SK-N-SH (cell line): ENCODE measurements at regions of chr5 and their contacts with region 1.

Region 1: DNA sequence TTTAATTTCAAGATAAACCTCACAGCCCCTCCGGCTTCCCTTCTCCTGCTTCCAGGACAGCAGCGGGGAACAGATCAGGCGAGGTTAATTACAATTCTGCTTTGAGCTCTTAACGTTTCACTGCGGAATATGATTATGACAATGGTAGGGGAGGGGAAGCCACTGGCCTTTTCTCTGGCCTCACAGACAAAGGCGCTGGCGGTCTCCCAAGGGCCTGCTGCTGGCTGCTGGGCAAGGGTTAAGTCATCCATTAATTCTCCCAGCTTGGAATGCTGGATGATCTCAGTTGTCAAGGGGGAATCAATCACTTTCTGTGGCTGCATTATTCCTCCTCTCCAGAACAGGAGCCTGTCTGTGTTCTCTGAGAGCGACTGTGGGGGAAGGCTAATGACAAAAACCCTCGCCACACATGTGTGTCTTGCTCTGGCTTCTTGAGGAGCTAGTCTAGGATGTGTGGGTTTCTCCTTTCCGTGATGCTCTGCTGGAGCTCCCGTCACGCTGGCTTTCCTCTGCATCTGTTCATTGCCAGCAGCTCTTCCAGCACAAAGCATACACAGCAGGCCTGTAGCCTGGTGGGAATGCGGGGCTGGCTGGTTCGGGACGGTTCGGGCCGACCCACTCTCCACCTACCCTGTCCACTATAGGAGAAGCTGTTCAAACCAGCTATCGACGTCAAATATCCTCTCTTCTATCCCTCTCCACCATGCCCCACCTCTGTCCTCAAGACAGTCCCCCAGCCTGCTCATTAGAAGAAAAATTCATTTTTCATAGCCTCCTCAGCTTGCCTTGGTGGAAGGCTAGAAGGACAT is 82.8 kb downstream of the DCP2 start:
- DNase-seq: peak; percentile 86
- H3K4me3 ChIP-seq: no peak overlapping the region
- H3K27ac ChIP-seq: peak overlapping the region; percentile 55 to 98
- H3K4me1 ChIP-seq: peaks cover 18 to 70% of the 10 kb centered on the region in 2 experiments
- H3K27me3 ChIP-seq: no peaks in the 10 kb centered on the region
- CTCF ChIP-seq: no peak
- EP300 ChIP-seq: peak; percentile 70 to 85; a peak in 3 of 4 replicates
- RAD21 ChIP-seq: peak; percentile 29

Region 2: DNA sequence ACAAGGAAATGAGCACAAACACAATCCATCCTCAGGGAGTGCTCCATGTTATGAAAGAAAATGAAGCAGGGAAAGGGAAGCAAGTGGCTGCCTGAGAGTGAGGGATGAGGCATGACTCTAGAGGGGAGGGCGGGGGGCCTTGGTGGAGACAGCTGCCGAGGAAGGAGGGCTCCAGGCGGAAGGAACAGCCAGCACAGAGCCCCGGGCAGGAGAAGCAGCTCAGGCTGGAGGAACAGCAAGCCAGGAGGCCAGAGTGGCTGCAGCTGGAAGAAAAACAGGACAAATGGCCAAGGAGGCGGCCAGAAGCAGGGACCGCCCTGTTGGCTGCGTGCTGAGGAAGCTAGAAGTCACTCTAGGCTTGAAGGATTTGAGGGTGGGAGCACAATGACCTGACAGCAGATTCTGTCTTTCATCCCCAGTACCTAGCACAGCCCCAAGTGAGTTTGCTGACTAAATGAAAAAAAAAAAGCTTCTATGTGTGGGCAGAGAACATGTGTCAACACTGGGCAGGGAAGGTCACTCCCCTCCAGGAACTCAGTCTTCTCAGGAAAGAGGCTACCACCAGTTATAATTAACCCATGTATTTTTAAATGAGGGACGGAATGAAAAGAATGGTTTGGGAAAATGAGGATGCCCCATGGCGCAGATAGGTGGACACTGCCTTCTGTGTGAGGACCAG is 59.9 kb after region 1 on chr5:
- CTCF ChIA-PET with region 1: interaction called, 6 read pairs
- POLR2A ChIA-PET with region 1: interaction called, 11 read pairs
- DNase-seq: peak; percentile 29
- H3K4me3 ChIP-seq: no peak overlapping the region
- H3K27ac ChIP-seq: peak overlapping the region in 1 of 2 experiments; percentile 97; a peak in 2 of 4 replicates
- H3K4me1 ChIP-seq: peaks cover 0 to 67% of the 10 kb centered on the region in 2 experiments; a peak in 2 of 4 replicates
- H3K27me3 ChIP-seq: no peaks in the 10 kb centered on the region; the same call in 1 of the 2 replicates
- CTCF ChIP-seq: no peak
- EP300 ChIP-seq: peak in 1 of 2 experiments; percentile 9; a peak in 1 of 4 replicates
- RAD21 ChIP-seq: no peak

Region 3: GRCh38 chr5:113224605-113225065 is 165.2 kb after region 1 on chr5:
- CTCF ChIA-PET with region 1: no interaction called
- POLR2A ChIA-PET with region 1: no interaction called
- DNase-seq: no peak
- H3K4me3 ChIP-seq: no peak overlapping the region
- H3K27ac ChIP-seq: no peak overlapping the region; a peak in 1 of 4 replicates
- H3K4me1 ChIP-seq: peaks cover 0 to 12% of the 10 kb centered on the region in 2 experiments; a peak in 2 of 4 replicates
- H3K27me3 ChIP-seq: no peaks in the 10 kb centered on the region
- CTCF ChIP-seq: no peak
- EP300 ChIP-seq: no peak
- RAD21 ChIP-seq: no peak